PC-9 (cell line): ENCODE measurements at regions of chr5 and their contacts with region 1.

Region 1: GRCh38 chr5:146446853-146447733 is at the start of gene TCERG1:
- DNase-seq: peak; percentile 99
- H3K4me3 ChIP-seq: peak within 1 kb of the TSS; percentile 84
- H3K27ac ChIP-seq: peak within 1 kb of the TSS; percentile 88
- H3K4me1 ChIP-seq: peaks cover 31% of the 10 kb centered on the region
- H3K27me3 ChIP-seq: no peaks in the 10 kb centered on the region
- CTCF ChIP-seq: peak; percentile 71
- total RNA-seq, gene TCERG1: 75.9 and 79.9 TPM in 2 replicates

Region 2: GRCh38 chr5:146203011-146203871 is 243.9 kb before region 1 on chr5 and contains the start of gene RBM27:
- CTCF ChIA-PET with region 1: interaction called, 3 read pairs
- POLR2A ChIA-PET with region 1: no interaction called
- intact Hi-C with region 1: loop called (anchors 1 kb)
- DNase-seq: peak; percentile 96 to 100
- H3K4me3 ChIP-seq: peak within 1 kb of the TSS; percentile 96
- H3K27ac ChIP-seq: peak within 1 kb of the TSS; percentile 75
- H3K4me1 ChIP-seq: peaks cover 33% of the 10 kb centered on the region
- H3K27me3 ChIP-seq: no peaks in the 10 kb centered on the region
- CTCF ChIP-seq: no peak
- total RNA-seq, gene RBM27: 12.0 and 25.1 TPM in 2 replicates

Region 3: GRCh38 chr5:146291421-146292074 is 155.5 kb before region 1 on chr5:
- CTCF ChIA-PET with region 1: no interaction called
- POLR2A ChIA-PET with region 1: no interaction called
- intact Hi-C with region 1: loop called (anchors 5 kb)
- DNase-seq: no peak
- H3K4me3 ChIP-seq: no peak overlapping the region
- H3K27ac ChIP-seq: no peak overlapping the region
- H3K4me1 ChIP-seq: peaks cover 25% of the 10 kb centered on the region
- H3K27me3 ChIP-seq: no peaks in the 10 kb centered on the region
- CTCF ChIP-seq: peak; percentile 75